ENCODE measurements at regions of chr2 and their contacts with region 1.

Region 1: GRCh38 chr2:33475224-33476130 is 972 bp upstream of the RASGRP3 start:
- DNase-seq: peak; percentile 55 to 94
- ATAC-seq: peak; percentile 77 to 86 (median 81)
- H3K4me3 ChIP-seq: peak overlapping the region; percentile 65
- H3K4me3 Mint-ChIP-seq: peak overlapping the region; percentile 95
- H3K27ac ChIP-seq: peak overlapping the region; percentile 95
- H3K27ac Mint-ChIP-seq: peak overlapping the region; percentile 95
- H3K4me1 ChIP-seq: peaks cover 13% of the 10 kb centered on the region
- H3K4me1 Mint-ChIP-seq: peaks cover 22 to 31% of the 10 kb centered on the region in 2 donors
- H3K27me3 ChIP-seq: no peaks in the 10 kb centered on the region
- H3K27me3 Mint-ChIP-seq: peaks cover 8 to 29% of the 10 kb centered on the region in 2 donors
- CTCF ChIP-seq: peak; percentile 79

Region 2: GRCh38 chr2:32925283-32925815 is 550.1 kb before region 1 on chr2:
- intact Hi-C with region 1: no loop called
- DNase-seq: no peak
- ATAC-seq: no peak
- H3K4me3 ChIP-seq: no peak overlapping the region
- H3K4me3 Mint-ChIP-seq: no peak overlapping the region
- H3K27ac ChIP-seq: no peak overlapping the region
- H3K27ac Mint-ChIP-seq: no peak overlapping the region
- H3K4me1 ChIP-seq: no peaks in the 10 kb centered on the region
- H3K4me1 Mint-ChIP-seq: no peaks in the 10 kb centered on the region
- H3K27me3 ChIP-seq: no peaks in the 10 kb centered on the region
- H3K27me3 Mint-ChIP-seq: peaks cover 16 to 28% of the 10 kb centered on the region in 2 donors
- CTCF ChIP-seq: no peak

Region 3: DNA sequence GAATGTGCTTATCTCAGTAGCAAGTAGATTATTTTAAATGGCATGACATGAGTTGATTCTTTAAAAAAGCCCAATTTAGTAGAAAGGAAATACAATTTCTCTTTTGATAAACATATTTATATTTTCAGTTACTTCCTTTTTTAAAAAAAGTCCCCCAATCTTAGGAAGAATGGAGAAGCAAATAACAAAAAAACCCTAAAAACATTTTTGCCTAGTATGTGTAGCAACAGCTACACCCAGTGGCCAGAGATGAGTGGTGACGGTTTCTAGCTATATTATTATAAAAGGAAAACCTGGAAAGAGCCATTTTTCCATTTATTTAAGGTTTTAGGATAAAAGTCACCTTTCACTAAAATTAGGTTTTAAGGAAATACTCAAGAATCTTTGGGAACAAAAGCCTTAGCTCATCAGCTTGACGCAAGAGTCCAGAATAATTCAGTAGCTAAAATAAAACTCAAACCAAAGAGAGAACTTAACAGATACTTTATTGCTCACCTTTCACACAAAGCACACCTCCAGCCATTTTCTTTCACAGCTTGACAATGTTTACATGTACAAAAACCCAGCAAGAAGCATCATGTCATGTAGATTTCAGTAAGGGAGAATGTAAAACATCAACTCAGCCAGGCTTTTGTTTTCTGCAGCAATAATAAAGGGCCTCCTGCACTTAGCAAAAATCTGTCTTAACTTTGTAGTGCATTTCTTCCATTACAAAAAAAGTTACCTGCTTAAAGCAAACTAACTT is 107.9 kb after region 1 on chr2:
- intact Hi-C with region 1: loop called (anchors 5 kb)
- DNase-seq: peak in 1 of 2 donors; percentile 71
- ATAC-seq: peak in 2 of 3 donors; percentile 60 to 61
- H3K4me3 ChIP-seq: no peak overlapping the region
- H3K4me3 Mint-ChIP-seq: no peak overlapping the region
- H3K27ac ChIP-seq: no peak overlapping the region
- H3K27ac Mint-ChIP-seq: no peak overlapping the region
- H3K4me1 ChIP-seq: no peaks in the 10 kb centered on the region
- H3K4me1 Mint-ChIP-seq: no peaks in the 10 kb centered on the region
- H3K27me3 ChIP-seq: no peaks in the 10 kb centered on the region
- H3K27me3 Mint-ChIP-seq: no peaks in the 10 kb centered on the region
- CTCF ChIP-seq: peak; percentile 77

Region 4: DNA sequence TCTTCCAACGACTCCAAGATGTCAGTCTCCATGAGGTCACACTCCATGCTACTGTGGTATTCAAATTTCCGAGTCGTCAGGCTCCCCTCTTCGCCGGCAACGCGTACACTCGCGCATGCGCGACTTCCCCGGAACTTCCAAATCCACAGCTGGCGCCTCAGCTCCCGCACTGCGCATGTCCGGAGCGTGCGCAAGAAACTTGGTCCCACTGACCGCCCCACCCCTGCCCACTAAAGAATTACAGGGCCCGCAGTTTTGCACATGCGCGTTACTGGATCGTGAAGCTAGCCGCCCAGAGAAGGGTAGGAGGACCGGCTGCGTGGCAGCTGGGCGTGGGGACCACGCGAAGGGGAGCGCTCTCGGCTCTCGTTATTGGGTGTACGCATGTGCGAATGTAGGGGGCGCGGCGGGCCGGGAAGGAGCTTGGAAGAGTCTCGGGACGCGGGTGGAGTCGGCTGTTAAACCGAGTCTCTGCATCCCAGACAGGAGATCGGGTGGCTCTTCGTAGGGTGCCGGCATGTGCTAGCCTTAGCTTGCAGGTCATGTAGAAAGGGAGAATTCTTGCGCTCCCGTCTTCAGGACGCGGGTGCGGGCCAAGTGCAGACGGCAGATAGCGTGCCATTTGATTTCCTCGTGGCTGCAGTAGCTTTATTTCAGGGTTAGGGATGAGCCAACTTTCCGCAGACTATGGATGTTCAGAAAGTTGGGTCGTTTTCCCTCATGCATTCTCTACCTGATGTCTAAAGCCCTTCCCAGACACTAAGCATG is 123.9 kb after region 1 on chr2 and contains the start of gene FAM98A:
- intact Hi-C with region 1: loop called (anchors 5 kb)
- DNase-seq: peak; percentile 96 to 100
- ATAC-seq: peak; percentile 92 to 98 (median 93)
- H3K4me3 ChIP-seq: peak within 1 kb of the TSS; percentile 97
- H3K4me3 Mint-ChIP-seq: peak within 1 kb of the TSS; percentile 98
- H3K27ac ChIP-seq: peak within 1 kb of the TSS; percentile 82
- H3K27ac Mint-ChIP-seq: peak within 1 kb of the TSS; percentile 91 to 99
- H3K4me1 ChIP-seq: peaks cover 6% of the 10 kb centered on the region
- H3K4me1 Mint-ChIP-seq: peaks cover 35 to 36% of the 10 kb centered on the region in 2 donors
- H3K27me3 ChIP-seq: no peaks in the 10 kb centered on the region
- H3K27me3 Mint-ChIP-seq: peaks cover 0 to 8% of the 10 kb centered on the region in 2 donors
- CTCF ChIP-seq: no peak
- total RNA-seq, gene FAM98A: 17.3 to 32.9 (median 22.2) TPM

Measured in natural killer cell (primary cell).